ENCODE measurements at regions of chr10 and their contacts with region 1.

Region 1: DNA sequence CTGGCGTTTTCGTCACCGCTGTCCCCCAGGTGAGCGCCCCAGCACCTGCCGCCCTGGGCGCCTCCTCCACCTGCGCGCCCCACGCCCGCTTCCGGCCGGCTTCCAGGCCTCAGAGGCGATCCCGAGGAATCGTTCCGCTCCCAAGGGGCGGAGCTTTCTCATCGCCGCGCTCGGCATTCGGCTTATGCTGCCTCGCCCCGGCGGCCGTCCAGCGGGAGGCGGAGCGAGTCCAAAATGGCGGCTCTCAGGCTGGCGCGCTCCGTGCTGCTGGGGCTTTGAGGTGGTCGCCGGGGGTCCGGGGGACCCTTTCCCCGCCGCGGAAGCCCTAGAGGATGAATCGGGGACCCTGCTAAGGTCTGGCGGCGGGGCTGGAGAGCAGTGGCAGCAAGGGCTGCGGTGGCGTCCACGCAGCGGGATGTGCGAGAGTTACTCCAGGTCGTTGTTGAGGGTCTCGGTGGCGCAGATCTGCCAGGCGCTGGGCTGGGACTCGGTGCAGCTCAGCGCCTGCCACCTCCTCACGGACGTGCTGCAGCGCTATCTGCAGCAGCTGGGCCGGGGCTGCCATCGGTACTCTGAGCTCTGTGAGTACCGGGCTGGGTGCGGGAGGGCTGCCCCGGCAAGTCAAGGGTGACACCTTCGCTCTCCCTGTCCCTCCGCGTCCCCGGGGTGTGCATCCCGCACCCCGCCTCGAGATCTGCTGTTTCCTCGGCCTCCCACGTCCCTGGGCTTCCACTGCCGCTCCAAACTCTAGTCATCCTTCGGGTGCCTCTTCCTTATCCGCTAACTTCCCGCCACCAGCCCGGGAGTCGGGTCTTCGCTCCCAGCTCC is at the start of gene TAF3:
- DNase-seq: peak; percentile 82 to 95 (median 90)
- H3K4me3 ChIP-seq: peak within 1 kb of the TSS; percentile 72 to 100 (median 98)
- H3K27ac ChIP-seq: peak within 1 kb of the TSS in 55 of 59 donors; percentile 1 to 92 (median 69)
- H3K27me3 ChIP-seq: no peaks in the 10 kb centered on the region
- CTCF ChIP-seq: peak in 38 of 56 donors; percentile 4 to 58 (median 34)
- total RNA-seq, gene TAF3: 9.9 to 18.7 (median 13.5) TPM

Region 2: GRCh38 chr10:7687228-7687907 is 131.1 kb before region 1 on chr10:
- intact Hi-C with region 1: loop called in 1 of 2 experiments (anchors 5 kb)
- DNase-seq: peak; percentile 65 to 91 (median 80)
- H3K4me3 ChIP-seq: no peak overlapping the region
- H3K27ac ChIP-seq: no peak overlapping the region
- H3K27me3 ChIP-seq: no peaks in the 10 kb centered on the region
- CTCF ChIP-seq: peak; percentile 78 to 99 (median 96)

Region 3: DNA sequence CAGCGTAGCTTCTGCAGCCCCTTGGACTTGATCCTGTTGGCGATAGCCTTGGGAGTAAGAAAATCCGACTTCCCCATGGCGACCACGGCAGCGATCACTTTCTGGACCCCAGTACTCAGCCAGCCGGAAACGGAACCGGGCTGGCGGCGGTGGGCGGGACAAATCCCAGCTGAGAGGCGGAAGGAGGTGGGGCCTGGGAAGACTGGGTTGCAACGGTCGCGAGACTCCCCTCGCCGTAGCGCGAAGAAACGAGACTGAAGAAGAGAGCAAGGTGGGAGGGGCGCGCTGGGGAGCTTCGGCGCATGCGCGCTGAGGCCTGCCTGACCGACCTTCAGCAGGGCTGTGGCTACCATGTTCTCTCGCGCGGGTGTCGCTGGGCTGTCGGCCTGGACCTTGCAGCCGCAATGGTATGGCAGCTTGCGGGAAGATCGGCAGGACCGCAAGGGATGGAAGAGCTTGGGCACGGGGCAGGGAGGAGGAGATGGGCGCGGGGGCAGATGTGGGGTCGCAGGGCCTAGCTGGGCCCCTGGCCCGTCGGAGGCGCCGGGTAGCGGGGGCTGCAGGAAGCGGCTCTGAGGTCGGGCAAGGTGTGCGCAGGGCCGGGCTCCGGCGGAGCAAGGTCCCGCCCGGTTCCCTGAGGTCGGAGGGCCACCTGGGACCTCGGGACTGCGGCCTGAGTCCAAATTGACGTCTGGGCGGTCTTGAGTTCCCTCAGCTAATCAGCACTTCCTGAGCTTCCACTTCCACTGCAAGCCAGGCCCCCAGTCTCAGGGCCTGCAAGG is 30.5 kb before region 1 on chr10 and contains the starts of genes ATP5F1C and KIN:
- intact Hi-C with region 1: loop called (anchors 2 kb)
- DNase-seq: peak; percentile 96 to 98 (median 97)
- H3K4me3 ChIP-seq: peak within 1 kb of the TSS; percentile 67 to 100 (median 96)
- H3K27ac ChIP-seq: peak within 1 kb of the TSS; percentile 12 to 92 (median 83)
- H3K27me3 ChIP-seq: no peaks in the 10 kb centered on the region
- CTCF ChIP-seq: peak in 23 of 56 donors; percentile 4 to 53 (median 23)
- total RNA-seq, gene ATP5F1C: 109 to 282 (median 209) TPM
- total RNA-seq, gene KIN: 6.3 to 21.7 (median 12.2) TPM